GM12878 (cell line): ENCODE measurements at regions of chr19 and their contacts with region 1.

Region 1: GRCh38 chr19:4815426-4816201 is 15.9 kb downstream of the TICAM1 start:
- DNase-seq: peak; percentile 48
- ATAC-seq: peak; percentile 82
- H3K4me3 ChIP-seq: no peak overlapping the region
- H3K27ac ChIP-seq: no peak overlapping the region
- H3K4me1 ChIP-seq: peaks cover 14% of the 10 kb centered on the region
- H3K27me3 ChIP-seq: no peaks in the 10 kb centered on the region
- CTCF ChIP-seq: no peak
- EP300 ChIP-seq: no peak
- POLR2A ChIP-seq: no peak; the same call in 1 of the 2 replicates
- RAD21 ChIP-seq: no peak

Region 2: DNA sequence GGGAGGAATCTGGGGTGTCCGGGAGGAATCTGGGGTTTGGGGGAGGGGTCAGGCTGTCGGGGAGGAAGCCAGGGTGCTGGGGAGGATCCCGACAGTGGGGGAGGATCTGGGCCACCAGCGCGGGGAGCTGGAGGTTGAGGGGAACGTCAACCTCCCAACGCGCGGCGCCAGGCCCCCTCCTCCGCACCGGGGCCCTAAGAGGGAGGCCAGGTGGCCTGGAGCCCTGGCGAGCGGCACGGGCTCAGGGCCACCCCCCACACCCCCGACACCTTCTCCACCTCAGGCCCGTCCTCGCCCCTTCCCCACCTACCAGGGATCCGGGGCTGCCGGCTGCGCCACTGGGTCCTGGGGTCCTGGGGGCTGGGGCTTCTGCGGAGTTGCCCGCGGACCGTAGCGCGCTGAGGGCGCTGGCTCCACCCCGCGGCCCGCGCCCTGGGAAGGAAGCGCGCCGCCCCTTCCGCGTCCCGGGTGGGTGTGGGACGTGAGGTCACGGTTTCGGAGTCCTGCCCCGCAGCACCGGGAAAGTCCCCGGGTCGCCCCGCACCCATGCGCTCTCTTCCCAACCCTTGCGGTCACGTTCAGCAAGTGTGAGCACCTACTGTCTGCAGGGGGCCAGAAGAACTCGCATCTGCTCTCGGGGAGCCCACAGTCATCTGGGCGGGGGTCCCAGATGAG is 15.8 kb after region 1 on chr19 and contains the start of gene TICAM1:
- CTCF ChIA-PET with region 1: interaction called, 148 read pairs
- POLR2A ChIA-PET with region 1: interaction called, 7 read pairs
- RAD21 ChIA-PET with region 1: interaction called, 20 read pairs
- SMC1A ChIA-PET with region 1: interaction called, 30 read pairs
- in situ Hi-C with region 1: no loop called
- intact Hi-C with region 1: no loop called
- DNase-seq: no peak
- ATAC-seq: peak; percentile 80
- H3K4me3 ChIP-seq: peak within 1 kb of the TSS; percentile 95
- H3K27ac ChIP-seq: peak within 1 kb of the TSS; percentile 92
- H3K4me1 ChIP-seq: no peaks in the 10 kb centered on the region
- H3K27me3 ChIP-seq: no peaks in the 10 kb centered on the region
- CTCF ChIP-seq: no peak
- EP300 ChIP-seq: no peak; a peak in 1 of 4 replicates
- POLR2A ChIP-seq: peak; percentile 86
- RAD21 ChIP-seq: no peak
- polyA plus RNA-seq, gene TICAM1: 0.31 to 0.99 TPM

Region 3: GRCh38 chr19:4844348-4845179 is 28.9 kb after region 1 on chr19:
- CTCF ChIA-PET with region 1: interaction called, 346 read pairs
- POLR2A ChIA-PET with region 1: interaction called, 10 read pairs
- RAD21 ChIA-PET with region 1: interaction called, 158 read pairs
- SMC1A ChIA-PET with region 1: interaction called, 176 read pairs
- in situ Hi-C with region 1: no loop called
- intact Hi-C with region 1: no loop called
- DNase-seq: no peak
- ATAC-seq: peak; percentile 60
- H3K4me3 ChIP-seq: no peak overlapping the region
- H3K27ac ChIP-seq: no peak overlapping the region
- H3K4me1 ChIP-seq: peaks cover 27% of the 10 kb centered on the region
- H3K27me3 ChIP-seq: no peaks in the 10 kb centered on the region
- CTCF ChIP-seq: no peak
- EP300 ChIP-seq: no peak
- POLR2A ChIP-seq: no peak
- RAD21 ChIP-seq: no peak

Region 4: GRCh38 chr19:4867534-4868285 is 52.1 kb after region 1 on chr19 and contains the start of gene PLIN3:
- CTCF ChIA-PET with region 1: interaction called, 53 read pairs
- POLR2A ChIA-PET with region 1: interaction called, 3 read pairs
- RAD21 ChIA-PET with region 1: interaction called, 26 read pairs
- SMC1A ChIA-PET with region 1: interaction called, 35 read pairs
- in situ Hi-C with region 1: no loop called
- intact Hi-C with region 1: no loop called
- DNase-seq: peak; percentile 65
- ATAC-seq: peak; percentile 86
- H3K4me3 ChIP-seq: peak within 1 kb of the TSS; percentile 98
- H3K27ac ChIP-seq: peak within 1 kb of the TSS; percentile 85
- H3K4me1 ChIP-seq: peaks cover 15% of the 10 kb centered on the region
- H3K27me3 ChIP-seq: no peaks in the 10 kb centered on the region
- CTCF ChIP-seq: no peak
- EP300 ChIP-seq: no peak
- POLR2A ChIP-seq: peak; percentile 74
- RAD21 ChIP-seq: no peak
- polyA plus RNA-seq, gene PLIN3: 7.7 to 19.0 TPM

Region 5: GRCh38 chr19:4916292-4917082 is 100.9 kb after region 1 on chr19:
- CTCF ChIA-PET with region 1: interaction called, 310 read pairs
- POLR2A ChIA-PET with region 1: interaction called, 8 read pairs
- RAD21 ChIA-PET with region 1: interaction called, 176 read pairs
- SMC1A ChIA-PET with region 1: interaction called, 94 read pairs
- in situ Hi-C with region 1: no loop called
- intact Hi-C with region 1: no loop called
- DNase-seq: no peak
- ATAC-seq: peak; percentile 64
- H3K4me3 ChIP-seq: peak overlapping the region; percentile 60
- H3K27ac ChIP-seq: peak overlapping the region; percentile 81
- H3K4me1 ChIP-seq: peaks cover 33% of the 10 kb centered on the region
- H3K27me3 ChIP-seq: no peaks in the 10 kb centered on the region
- CTCF ChIP-seq: no peak
- EP300 ChIP-seq: no peak
- POLR2A ChIP-seq: peak; percentile 80
- RAD21 ChIP-seq: no peak

Region 6: GRCh38 chr19:5031231-5032100 is 215.9 kb after region 1 on chr19:
- CTCF ChIA-PET with region 1: interaction called, 72 read pairs
- POLR2A ChIA-PET with region 1: no interaction called
- RAD21 ChIA-PET with region 1: interaction called, 35 read pairs
- SMC1A ChIA-PET with region 1: interaction called, 15 read pairs
- in situ Hi-C with region 1: no loop called
- intact Hi-C with region 1: no loop called
- DNase-seq: peak; percentile 12
- ATAC-seq: peak; percentile 98
- H3K4me3 ChIP-seq: no peak overlapping the region
- H3K27ac ChIP-seq: no peak overlapping the region
- H3K4me1 ChIP-seq: peaks cover 7% of the 10 kb centered on the region
- H3K27me3 ChIP-seq: no peaks in the 10 kb centered on the region
- CTCF ChIP-seq: peak; percentile 92 to 97 (median 96); a peak in 5 of 6 replicates
- EP300 ChIP-seq: no peak
- POLR2A ChIP-seq: no peak
- RAD21 ChIP-seq: peak; percentile 90